ENCODE measurements at regions of chr3 and their contacts with region 1.

Region 1: DNA sequence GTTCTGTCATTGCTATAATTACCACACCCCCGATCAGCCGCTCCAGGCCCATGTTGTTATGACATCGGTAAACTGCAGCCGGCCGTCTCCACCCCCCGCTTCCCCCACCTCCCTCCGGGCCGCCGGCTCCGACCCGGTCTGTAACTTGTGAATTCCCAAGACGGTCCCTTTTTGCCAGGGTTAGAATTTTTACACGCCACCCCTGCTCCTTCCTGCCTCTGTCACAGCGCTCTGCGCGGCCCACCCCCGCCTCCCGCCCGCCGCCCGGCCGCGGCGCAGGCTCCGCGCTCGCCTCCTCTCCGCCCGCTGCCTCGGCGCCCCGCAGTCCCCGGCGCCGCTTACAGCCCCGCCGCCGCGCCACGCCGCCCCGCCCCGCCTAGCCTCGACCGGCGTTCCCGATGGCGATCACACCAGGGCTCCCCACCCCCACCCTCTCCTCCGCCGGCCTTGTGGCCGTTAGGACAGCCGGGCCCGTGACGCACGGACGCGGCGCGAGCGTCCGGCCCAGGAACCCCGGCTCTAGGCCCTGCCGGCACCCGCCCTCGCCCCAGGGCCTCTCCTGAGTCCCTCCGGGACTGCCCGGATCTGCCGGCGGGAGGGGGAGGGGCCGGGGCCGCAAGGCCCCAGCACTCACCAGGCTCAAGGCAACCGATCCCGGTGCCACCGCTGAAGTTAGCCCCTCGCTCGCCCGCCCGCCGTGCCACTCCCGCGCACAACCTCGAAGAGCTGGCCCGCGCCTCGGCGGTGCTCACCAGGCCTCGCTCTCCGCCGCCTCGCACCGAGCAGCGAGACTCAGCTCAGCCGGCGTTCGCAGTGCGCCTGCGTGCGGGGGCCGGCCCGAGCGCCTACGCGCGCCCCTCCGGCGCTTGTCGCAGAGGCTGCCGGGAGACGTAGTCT is at the start of gene KPNA1:
- DNase-seq: peak; percentile 97
- H3K4me3 Mint-ChIP-seq: peak within 1 kb of the TSS; percentile 84
- H3K27ac Mint-ChIP-seq: peak within 1 kb of the TSS; percentile 91
- H3K4me1 Mint-ChIP-seq: peaks cover 26% of the 10 kb centered on the region
- H3K27me3 Mint-ChIP-seq: no peaks in the 10 kb centered on the region
- total RNA-seq, gene KPNA1: 78.4 and 79.4 TPM in 2 replicates

Region 2: DNA sequence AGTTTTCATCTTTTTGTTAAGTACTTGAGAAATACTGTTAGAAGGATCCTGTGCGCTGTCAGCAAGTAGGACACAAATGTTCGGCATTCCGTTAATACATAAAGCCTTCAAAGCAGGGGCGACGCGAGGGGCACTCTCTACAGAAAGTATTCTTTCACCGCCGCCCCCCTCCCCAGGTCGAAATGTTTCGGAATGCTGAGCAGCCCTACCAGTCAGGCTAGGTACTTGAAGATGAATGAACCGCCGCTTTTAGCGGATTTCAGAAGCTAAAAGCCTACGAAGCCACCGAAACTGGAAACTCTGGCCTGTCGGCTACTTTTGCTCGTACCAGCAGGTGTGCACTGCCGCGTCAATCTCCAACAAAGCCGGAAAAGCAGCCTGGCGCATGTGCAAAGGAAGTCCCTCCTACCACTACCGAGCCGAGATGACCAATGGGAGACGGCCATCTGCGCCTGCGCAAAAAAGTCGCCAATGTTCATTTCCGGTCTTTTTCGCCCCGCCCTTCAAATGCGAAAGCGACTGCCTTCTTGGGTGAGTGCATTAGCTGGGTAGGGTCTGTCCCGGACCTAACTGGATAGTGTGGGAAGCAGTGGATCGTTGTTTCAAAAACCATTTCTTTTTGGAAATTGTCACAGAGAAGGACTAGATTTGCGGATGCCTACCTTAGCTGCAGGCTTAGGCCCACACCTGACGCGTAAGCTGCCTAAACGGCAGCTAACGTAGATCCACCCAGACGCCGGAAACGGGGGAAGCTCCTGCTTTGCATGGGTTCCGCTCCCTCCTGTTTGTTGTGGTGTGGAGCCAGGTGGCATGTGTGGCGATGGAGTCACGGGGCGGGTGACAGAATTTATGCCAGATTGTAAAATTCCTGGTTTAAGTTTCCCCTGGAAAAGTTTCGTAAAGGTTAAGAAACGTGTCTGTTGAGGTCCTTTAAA is 98.4 kb before region 1 on chr3 and contains the start of gene WDR5B:
- intact Hi-C with region 1: loop called (anchors 1 kb)
- DNase-seq: peak; percentile 99
- H3K4me3 Mint-ChIP-seq: peak within 1 kb of the TSS; percentile 98
- H3K27ac Mint-ChIP-seq: peak within 1 kb of the TSS; percentile 99
- H3K4me1 Mint-ChIP-seq: peaks cover 38% of the 10 kb centered on the region
- H3K27me3 Mint-ChIP-seq: peaks cover 3% of the 10 kb centered on the region
- total RNA-seq, gene WDR5B: 4.8 and 4.9 TPM in 2 replicates

Region 3: GRCh38 chr3:122458992-122459391 is 55.4 kb before region 1 on chr3:
- intact Hi-C with region 1: loop called (anchors 5 kb)
- DNase-seq: no peak
- H3K4me3 Mint-ChIP-seq: no peak overlapping the region
- H3K27ac Mint-ChIP-seq: no peak overlapping the region
- H3K4me1 Mint-ChIP-seq: peaks cover 2% of the 10 kb centered on the region
- H3K27me3 Mint-ChIP-seq: no peaks in the 10 kb centered on the region

Region 4: DNA sequence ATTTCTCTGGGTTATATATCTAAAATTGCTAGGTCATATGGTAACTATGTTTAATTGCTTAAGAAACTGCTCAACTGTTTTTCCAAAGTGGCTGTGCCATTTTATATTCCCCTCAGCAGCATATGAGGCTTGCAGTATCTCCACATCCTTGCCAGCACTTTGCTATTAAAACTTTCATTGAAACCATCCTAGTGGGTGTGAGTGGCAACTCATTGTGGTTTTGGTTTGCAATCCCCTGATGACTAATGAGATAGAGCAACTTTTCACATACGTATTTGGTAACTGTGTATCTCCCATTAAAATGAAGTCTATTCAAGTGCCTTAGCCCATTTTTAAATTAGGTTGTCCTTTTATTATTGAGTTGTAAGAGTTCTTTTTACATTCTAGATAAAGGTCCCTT is 16.9 kb before region 1 on chr3:
- intact Hi-C with region 1: loop called (anchors 1 kb)
- DNase-seq: peak; percentile 67
- H3K4me3 Mint-ChIP-seq: no peak overlapping the region
- H3K27ac Mint-ChIP-seq: peak overlapping the region; percentile 15
- H3K4me1 Mint-ChIP-seq: peaks cover 29% of the 10 kb centered on the region
- H3K27me3 Mint-ChIP-seq: no peaks in the 10 kb centered on the region